Activated B cell treated with CpG ODN at 0.5 μM for 24 hours (primary cell): ENCODE measurements at regions of chr6 and their contacts with region 1.

Region 1: DNA sequence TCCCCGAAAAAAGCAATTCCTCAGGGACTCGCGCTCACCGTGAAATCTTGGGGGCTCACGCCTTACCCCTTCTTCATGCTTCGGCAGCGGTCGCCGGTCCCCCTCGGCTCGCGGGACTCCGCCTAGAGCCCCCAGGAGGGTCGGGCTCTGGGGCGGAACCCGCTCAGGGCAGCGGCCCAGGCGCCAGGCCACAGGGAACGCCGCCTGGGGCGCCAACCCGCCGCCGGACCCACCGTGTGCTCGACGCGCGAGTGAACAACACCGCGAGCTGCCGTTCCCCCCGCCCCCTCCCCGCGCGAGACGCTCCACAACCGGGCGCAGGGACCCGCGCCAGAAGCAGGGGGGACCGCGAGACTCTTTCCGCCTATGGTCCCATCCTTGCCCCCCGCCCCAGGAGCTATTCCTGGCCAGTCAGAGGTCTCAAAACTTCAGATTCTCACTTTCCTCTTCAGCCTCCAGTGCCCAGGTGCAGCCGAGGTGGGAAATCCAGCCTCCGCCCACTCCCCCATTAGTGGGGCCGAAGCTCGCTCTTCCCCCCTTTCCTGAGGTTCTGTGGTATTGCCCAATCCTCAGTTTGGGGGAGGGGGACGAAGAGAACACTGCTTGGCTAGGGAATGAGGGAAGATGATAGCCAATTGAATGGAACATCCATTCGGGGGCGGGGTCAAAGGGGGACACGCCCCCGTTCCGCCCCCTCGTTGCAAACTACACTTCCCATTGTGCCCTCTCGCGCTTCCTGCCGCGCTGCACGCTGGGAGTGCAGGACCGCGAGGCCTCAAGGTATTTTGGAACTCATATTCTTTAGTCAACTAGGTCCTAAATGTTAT is at the start of gene WASF1:
- DNase-seq: peak; percentile 92
- ATAC-seq: peak; percentile 80
- H3K4me3 Mint-ChIP-seq: no peak within 1 kb of the TSS
- H3K27ac Mint-ChIP-seq: peak within 1 kb of the TSS; percentile 86
- H3K4me1 Mint-ChIP-seq: peaks cover 7% of the 10 kb centered on the region
- H3K27me3 Mint-ChIP-seq: no peaks in the 10 kb centered on the region
- CTCF ChIP-seq: no peak
- total RNA-seq, gene WASF1: 5.1 and 6.2 TPM in 2 replicates

Region 2: GRCh38 chr6:109455502-109456282 is 723.9 kb before region 1 on chr6 and contains the start of gene MICAL1:
- CTCF ChIA-PET with region 1: no interaction called
- POLR2A ChIA-PET with region 1: interaction called, 3 read pairs
- intact Hi-C with region 1: loop called (anchors 1 kb)
- DNase-seq: peak; percentile 82
- ATAC-seq: peak; percentile 58
- H3K4me3 Mint-ChIP-seq: peak within 1 kb of the TSS; percentile 97
- H3K27ac Mint-ChIP-seq: peak within 1 kb of the TSS; percentile 98
- H3K4me1 Mint-ChIP-seq: peaks cover 80% of the 10 kb centered on the region
- H3K27me3 Mint-ChIP-seq: no peaks in the 10 kb centered on the region
- CTCF ChIP-seq: no peak
- total RNA-seq, gene MICAL1: 104 and 120 TPM in 2 replicates

Region 3: GRCh38 chr6:109690737-109691621 is 488.6 kb before region 1 on chr6 and contains the starts of genes AK9 and FIG4:
- CTCF ChIA-PET with region 1: no interaction called
- POLR2A ChIA-PET with region 1: no interaction called
- intact Hi-C with region 1: loop called (anchors 1 kb)
- DNase-seq: peak; percentile 88
- ATAC-seq: peak; percentile 93
- H3K4me3 Mint-ChIP-seq: peak within 1 kb of the TSS; percentile 94
- H3K27ac Mint-ChIP-seq: peak within 1 kb of the TSS; percentile 95
- H3K4me1 Mint-ChIP-seq: peaks cover 42% of the 10 kb centered on the region
- H3K27me3 Mint-ChIP-seq: no peaks in the 10 kb centered on the region
- CTCF ChIP-seq: no peak
- total RNA-seq, gene AK9: 9.1 and 10.6 TPM in 2 replicates
- total RNA-seq, gene FIG4: 19.8 and 21.8 TPM in 2 replicates

Region 4: GRCh38 chr6:109978174-109979032 is 201.2 kb before region 1 on chr6 and contains the start of gene GPR6:
- CTCF ChIA-PET with region 1: no interaction called
- POLR2A ChIA-PET with region 1: no interaction called
- intact Hi-C with region 1: no loop called
- DNase-seq: peak; percentile 29
- ATAC-seq: peak; percentile 60
- H3K4me3 Mint-ChIP-seq: no peak within 1 kb of the TSS
- H3K27ac Mint-ChIP-seq: no peak within 1 kb of the TSS
- H3K4me1 Mint-ChIP-seq: no peaks in the 10 kb centered on the region
- H3K27me3 Mint-ChIP-seq: peaks cover 48% of the 10 kb centered on the region
- CTCF ChIP-seq: no peak
- total RNA-seq, gene GPR6: not detected in 2 replicates

Region 5: GRCh38 chr6:110039364-110039980 is 140.1 kb before region 1 on chr6:
- CTCF ChIA-PET with region 1: interaction called, 9 read pairs
- POLR2A ChIA-PET with region 1: no interaction called
- intact Hi-C with region 1: loop called (anchors 1 kb)
- DNase-seq: peak; percentile 75
- ATAC-seq: peak; percentile 87
- H3K4me3 Mint-ChIP-seq: peak overlapping the region; percentile 89
- H3K27ac Mint-ChIP-seq: peak overlapping the region; percentile 91
- H3K4me1 Mint-ChIP-seq: peaks cover 24% of the 10 kb centered on the region
- H3K27me3 Mint-ChIP-seq: no peaks in the 10 kb centered on the region
- CTCF ChIP-seq: no peak

Region 6: DNA sequence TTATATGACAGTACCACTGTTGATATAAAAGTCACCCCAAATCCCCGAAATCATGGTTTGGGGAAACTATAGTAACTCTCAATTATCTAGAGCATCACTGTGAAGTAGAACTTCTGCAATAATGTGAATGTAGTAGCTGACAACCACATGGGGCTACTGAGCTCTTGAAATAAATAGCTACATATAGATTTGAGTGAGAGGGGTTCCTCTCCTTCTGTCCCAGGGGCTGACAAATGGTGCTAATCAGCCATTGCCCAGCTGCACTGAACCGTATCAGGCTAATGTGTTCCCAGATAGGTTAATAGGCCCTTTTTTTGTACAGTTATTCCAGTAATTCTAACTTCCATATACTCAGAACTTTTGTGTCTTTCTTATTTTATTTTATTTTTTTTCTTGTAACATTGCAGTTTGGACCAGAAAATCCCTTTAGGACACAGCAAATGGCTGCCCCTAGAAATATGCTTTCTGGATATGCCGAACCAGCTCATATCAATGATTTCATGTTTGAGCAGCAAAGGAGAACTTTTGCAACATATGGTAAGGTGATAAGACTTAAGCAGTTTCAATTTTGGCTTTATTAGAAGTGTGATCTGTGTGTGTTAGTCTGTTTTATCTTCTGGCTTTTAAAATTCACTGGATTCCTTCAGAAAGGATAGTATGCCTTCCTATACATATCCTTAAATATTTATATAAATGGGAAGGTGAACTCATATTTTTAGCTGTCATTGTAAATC is 21.7 kb after region 1 on chr6:
- CTCF ChIA-PET with region 1: interaction called, 33 read pairs
- POLR2A ChIA-PET with region 1: interaction called, 86 read pairs
- intact Hi-C with region 1: loop called (anchors 1 kb)
- DNase-seq: no peak
- ATAC-seq: no peak
- H3K4me3 Mint-ChIP-seq: no peak overlapping the region
- H3K27ac Mint-ChIP-seq: peak overlapping the region; percentile 63
- H3K4me1 Mint-ChIP-seq: peaks cover 65% of the 10 kb centered on the region
- H3K27me3 Mint-ChIP-seq: no peaks in the 10 kb centered on the region
- CTCF ChIP-seq: no peak

Region 7: DNA sequence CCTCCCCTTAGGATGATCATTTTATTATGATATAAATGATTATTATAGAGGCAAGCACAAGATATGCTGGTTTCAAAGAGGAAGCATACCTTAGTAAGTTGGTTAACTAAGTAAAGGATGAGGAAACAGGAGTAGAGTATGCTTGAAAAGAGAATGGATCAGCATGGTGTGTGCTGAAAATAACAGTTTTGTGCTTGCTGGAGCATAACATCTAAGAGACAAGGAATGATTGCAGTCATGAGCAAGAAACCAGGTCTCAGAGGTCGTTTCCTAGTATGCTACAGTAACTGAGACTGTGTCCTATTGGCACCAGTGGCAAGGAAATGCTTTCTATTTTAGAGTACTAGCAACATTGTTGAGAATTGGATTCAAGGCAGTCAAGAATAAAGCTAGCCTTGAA is 34.7 kb after region 1 on chr6:
- CTCF ChIA-PET with region 1: interaction called, 11 read pairs
- POLR2A ChIA-PET with region 1: interaction called, 3 read pairs
- intact Hi-C with region 1: no loop called
- DNase-seq: no peak
- ATAC-seq: peak; percentile 34
- H3K4me3 Mint-ChIP-seq: no peak overlapping the region
- H3K27ac Mint-ChIP-seq: peak overlapping the region; percentile 2
- H3K4me1 Mint-ChIP-seq: peaks cover 22% of the 10 kb centered on the region
- H3K27me3 Mint-ChIP-seq: no peaks in the 10 kb centered on the region
- CTCF ChIP-seq: no peak

Region 8: GRCh38 chr6:110357664-110358552 is 178.3 kb after region 1 on chr6 and contains the start of gene METTL24:
- CTCF ChIA-PET with region 1: no interaction called
- POLR2A ChIA-PET with region 1: no interaction called
- intact Hi-C with region 1: loop called (anchors 1 kb)
- DNase-seq: peak; percentile 28
- ATAC-seq: peak; percentile 79
- H3K4me3 Mint-ChIP-seq: peak within 1 kb of the TSS; percentile 83
- H3K27ac Mint-ChIP-seq: no peak within 1 kb of the TSS
- H3K4me1 Mint-ChIP-seq: peaks cover 4% of the 10 kb centered on the region
- H3K27me3 Mint-ChIP-seq: peaks cover 56% of the 10 kb centered on the region
- CTCF ChIP-seq: no peak
- total RNA-seq, gene METTL24: not detected in 2 replicates

Region 9: DNA sequence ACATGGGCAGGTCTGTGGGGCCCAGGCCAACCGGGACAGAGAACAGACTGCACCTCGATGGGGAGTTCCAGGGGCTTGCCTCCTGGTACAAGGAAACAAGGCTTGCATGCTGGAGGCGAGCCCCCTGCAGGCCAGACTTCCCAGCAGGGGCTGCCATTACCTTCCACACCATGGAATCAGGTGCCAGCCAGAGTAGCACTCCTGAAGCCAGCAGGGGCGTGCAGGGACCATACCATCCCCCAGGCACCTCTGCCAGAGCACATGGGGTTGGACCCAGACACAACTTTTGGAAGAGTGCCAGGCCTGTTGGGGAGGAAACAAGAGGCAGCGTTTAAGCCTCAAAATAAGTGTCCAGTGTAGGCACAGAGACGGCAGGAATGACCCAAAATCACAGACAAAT is 229.3 kb after region 1 on chr6:
- CTCF ChIA-PET with region 1: no interaction called
- POLR2A ChIA-PET with region 1: no interaction called
- intact Hi-C with region 1: no loop called
- DNase-seq: no peak
- ATAC-seq: no peak
- H3K4me3 Mint-ChIP-seq: no peak overlapping the region
- H3K27ac Mint-ChIP-seq: no peak overlapping the region
- H3K4me1 Mint-ChIP-seq: no peaks in the 10 kb centered on the region
- H3K27me3 Mint-ChIP-seq: peaks cover 1% of the 10 kb centered on the region
- CTCF ChIP-seq: no peak

Region 10: DNA sequence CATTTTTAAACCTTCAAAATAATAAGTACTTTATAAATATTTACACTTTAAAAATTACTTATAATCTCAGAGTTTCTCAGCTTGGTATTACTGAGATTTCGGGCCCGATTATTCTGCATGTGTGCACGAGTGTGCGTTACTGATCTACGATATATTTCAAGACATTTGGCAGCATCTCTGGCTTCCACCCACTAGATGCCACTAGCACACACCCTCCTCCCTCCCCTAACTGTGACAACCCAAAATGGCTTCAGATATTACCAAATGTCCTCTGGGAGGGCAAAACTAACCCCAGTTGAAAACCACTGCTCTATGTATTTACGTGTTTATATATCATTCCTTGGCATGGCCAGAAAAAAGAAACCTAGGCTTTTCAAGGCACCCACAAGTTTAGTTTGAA is 1597.7 kb after region 1 on chr6:
- CTCF ChIA-PET with region 1: no interaction called
- POLR2A ChIA-PET with region 1: no interaction called
- intact Hi-C with region 1: no loop called
- DNase-seq: no peak
- ATAC-seq: peak; percentile 77
- H3K4me3 Mint-ChIP-seq: peak overlapping the region; percentile 28
- H3K27ac Mint-ChIP-seq: no peak overlapping the region
- H3K4me1 Mint-ChIP-seq: peaks cover 9% of the 10 kb centered on the region
- H3K27me3 Mint-ChIP-seq: no peaks in the 10 kb centered on the region
- CTCF ChIP-seq: no peak